ENCODE measurements at regions of chr1 and their contacts with region 1.

Region 1: DNA sequence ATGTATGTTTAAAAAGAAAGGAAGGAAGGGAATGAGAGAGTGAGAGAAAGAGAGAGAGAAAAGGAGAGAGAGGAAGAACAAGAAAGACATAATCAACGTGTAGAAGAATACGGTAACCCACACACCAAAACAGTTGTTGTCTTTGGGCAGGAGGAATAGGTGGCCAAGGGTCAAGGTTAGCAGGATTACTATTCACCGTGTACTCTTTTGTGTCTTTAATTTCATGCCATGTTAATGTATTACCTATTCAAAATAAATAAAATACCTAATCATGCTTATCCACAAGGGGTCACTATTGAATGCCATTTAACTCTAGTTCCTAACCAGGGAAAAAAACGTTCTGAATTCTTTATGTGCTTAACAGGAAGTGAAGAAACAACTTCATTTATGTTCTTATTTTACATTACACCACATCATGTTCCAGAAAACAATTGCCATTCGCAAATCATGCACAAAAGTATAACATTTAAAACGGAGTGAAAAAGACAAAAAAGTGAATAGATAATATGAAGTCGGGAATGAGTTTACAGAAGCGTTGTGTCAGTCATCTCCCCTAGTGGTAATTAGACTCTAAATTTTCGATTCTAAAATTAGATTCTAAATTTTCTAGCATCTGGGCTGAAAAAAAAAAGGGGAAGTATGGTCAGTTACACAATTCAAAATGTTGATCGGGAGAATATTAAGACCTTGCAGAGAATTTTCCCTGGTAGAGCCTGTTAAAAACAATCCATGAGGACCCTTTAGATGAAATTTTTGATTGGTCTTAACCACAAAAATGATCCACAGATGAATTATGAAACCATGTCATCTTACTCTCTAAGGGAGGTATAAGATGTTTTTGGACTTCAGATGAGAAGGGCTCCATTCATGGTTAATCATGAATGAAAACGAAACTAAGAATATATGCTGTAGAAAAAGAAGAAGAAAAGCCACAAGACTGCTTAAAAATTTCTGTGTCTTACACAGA is 700 bp upstream of the KMO start:
- DNase-seq: no peak
- H3K4me3 ChIP-seq: peak overlapping the region; percentile 33 to 62 (median 45)
- H3K27ac ChIP-seq: peak overlapping the region; percentile 22 to 51 (median 24)
- H3K4me1 ChIP-seq: peaks cover 0 to 4% (median 0%) of the 10 kb centered on the region in 3 donors
- H3K27me3 ChIP-seq: peaks cover 0 to 10% (median 0%) of the 10 kb centered on the region in 4 donors
- CTCF ChIP-seq: peak; percentile 39 to 79 (median 61)
- POLR2A ChIP-seq: no peak

Region 2: GRCh38 chr1:241447031-241447644 is 84.3 kb before region 1 on chr1:
- intact Hi-C with region 1: no loop called
- DNase-seq: no peak
- H3K4me3 ChIP-seq: no peak overlapping the region
- H3K27ac ChIP-seq: no peak overlapping the region
- H3K4me1 ChIP-seq: no peaks in the 10 kb centered on the region
- H3K27me3 ChIP-seq: no peaks in the 10 kb centered on the region
- CTCF ChIP-seq: no peak
- POLR2A ChIP-seq: no peak

Region 3: DNA sequence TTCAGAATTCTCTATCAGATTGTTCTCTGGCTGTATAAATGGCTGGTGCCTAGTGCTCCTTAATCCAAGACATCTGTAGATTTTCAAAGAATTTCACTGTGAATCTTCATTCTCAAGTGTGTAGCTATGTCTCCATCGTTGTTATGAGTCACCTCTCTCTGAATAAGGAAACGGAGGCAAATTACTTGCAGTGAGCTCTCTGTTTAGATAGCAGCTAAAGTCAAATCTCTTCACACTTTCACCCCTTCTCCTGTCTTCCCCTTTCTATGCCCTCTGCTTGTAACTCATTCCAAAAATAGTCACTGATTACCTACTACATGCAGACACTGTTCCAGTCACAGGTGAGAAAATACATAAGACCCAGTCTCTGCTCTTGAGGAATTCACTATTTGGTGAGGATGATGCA is 69.0 kb after region 1 on chr1:
- intact Hi-C with region 1: loop called (anchors 10 kb)
- DNase-seq: no peak
- H3K4me3 ChIP-seq: no peak overlapping the region
- H3K27ac ChIP-seq: no peak overlapping the region
- H3K4me1 ChIP-seq: peaks cover 0 to 7% (median 0%) of the 10 kb centered on the region in 3 donors
- H3K27me3 ChIP-seq: no peaks in the 10 kb centered on the region
- CTCF ChIP-seq: no peak
- POLR2A ChIP-seq: no peak

Region 4: GRCh38 chr1:241834733-241835377 is 303.4 kb after region 1 on chr1:
- intact Hi-C with region 1: loop called (anchors 10 kb)
- DNase-seq: no peak
- H3K4me3 ChIP-seq: no peak overlapping the region
- H3K27ac ChIP-seq: no peak overlapping the region
- H3K4me1 ChIP-seq: peaks cover 0 to 9% (median 0%) of the 10 kb centered on the region in 3 donors
- H3K27me3 ChIP-seq: peaks cover 0 to 11% (median 0%) of the 10 kb centered on the region in 4 donors
- CTCF ChIP-seq: peak in 5 of 6 experiments; percentile 27 to 66 (median 48)
- POLR2A ChIP-seq: no peak

Measured in esophagus squamous epithelium (tissue), 5 donors.